Activated CD8-positive, alpha-beta T cell treated with anti-CD3 and anti-CD28 coated beads for 36 hours (primary cell): ENCODE measurements at regions of chr5 and their contacts with region 1.

Region 1: DNA sequence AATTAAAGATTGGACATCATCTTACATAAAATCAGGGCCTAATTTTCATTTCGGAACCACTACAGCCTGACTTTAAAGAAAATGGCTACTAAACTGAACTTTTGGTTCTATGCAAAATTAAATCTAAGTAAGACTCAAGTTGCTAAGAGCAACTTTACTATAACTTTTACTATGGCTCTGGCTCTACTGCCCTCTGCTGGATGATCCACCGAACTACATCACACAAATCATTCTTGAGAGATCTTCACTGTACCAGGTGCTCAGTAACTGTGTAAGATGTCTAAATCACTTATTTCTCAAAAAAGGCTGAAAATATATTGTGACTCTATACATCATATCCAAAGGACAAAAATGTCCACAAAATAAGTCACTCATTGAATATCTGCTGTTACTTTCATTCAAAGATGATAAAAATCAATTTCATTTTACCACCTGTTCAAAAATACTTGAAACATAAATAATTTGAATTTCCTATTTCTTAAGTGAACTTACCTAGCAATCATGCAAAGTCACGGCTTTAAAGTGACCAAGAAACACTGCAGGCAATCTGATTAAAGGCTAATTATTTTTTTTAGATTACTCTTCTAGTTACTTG is 13.5 kb downstream of the MOCS2 start:
- DNase-seq: peak; percentile 86
- ATAC-seq: peak; percentile 88
- H3K4me3 Mint-ChIP-seq: no peak overlapping the region
- H3K27ac Mint-ChIP-seq: no peak overlapping the region
- H3K4me1 Mint-ChIP-seq: peaks cover 3% of the 10 kb centered on the region
- H3K27me3 Mint-ChIP-seq: no peaks in the 10 kb centered on the region
- CTCF ChIP-seq: peak; percentile 81

Region 2: DNA sequence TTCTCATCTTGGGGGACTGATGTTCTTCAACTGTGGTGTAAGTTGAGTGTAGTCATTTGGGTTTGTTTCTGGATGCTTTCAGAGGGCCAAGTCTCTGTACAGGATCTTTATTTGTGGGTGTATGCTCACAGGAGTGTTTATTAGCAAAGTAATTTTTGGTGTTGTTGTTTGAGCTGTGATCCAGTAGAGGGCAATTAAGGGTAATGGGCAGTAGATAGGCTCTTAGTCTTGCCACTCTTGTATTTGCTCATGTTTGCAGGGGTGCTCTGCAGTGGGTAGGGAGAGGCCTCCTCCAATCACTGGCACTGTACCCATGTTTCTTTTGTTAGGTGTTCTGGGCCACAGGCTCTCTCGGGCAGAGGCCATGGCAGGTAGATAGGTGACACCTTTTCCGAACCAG is 152.7 kb before region 1 on chr5:
- CTCF ChIA-PET with region 1: interaction called, 144 read pairs
- POLR2A ChIA-PET with region 1: interaction called, 4 read pairs
- intact Hi-C with region 1: loop called (anchors 1 kb)
- DNase-seq: no peak
- ATAC-seq: peak; percentile 75
- H3K4me3 Mint-ChIP-seq: no peak overlapping the region
- H3K27ac Mint-ChIP-seq: no peak overlapping the region
- H3K4me1 Mint-ChIP-seq: peaks cover 14% of the 10 kb centered on the region
- H3K27me3 Mint-ChIP-seq: no peaks in the 10 kb centered on the region
- CTCF ChIP-seq: no peak

Region 3: GRCh38 chr5:53035868-53036381 is 60.1 kb before region 1 on chr5:
- CTCF ChIA-PET with region 1: interaction called, 5 read pairs
- POLR2A ChIA-PET with region 1: no interaction called
- intact Hi-C with region 1: loop called (anchors 10 kb)
- DNase-seq: peak; percentile 20
- ATAC-seq: no peak
- H3K4me3 Mint-ChIP-seq: no peak overlapping the region
- H3K27ac Mint-ChIP-seq: no peak overlapping the region
- H3K4me1 Mint-ChIP-seq: peaks cover 40% of the 10 kb centered on the region
- H3K27me3 Mint-ChIP-seq: no peaks in the 10 kb centered on the region
- CTCF ChIP-seq: peak; percentile 70

Region 4: DNA sequence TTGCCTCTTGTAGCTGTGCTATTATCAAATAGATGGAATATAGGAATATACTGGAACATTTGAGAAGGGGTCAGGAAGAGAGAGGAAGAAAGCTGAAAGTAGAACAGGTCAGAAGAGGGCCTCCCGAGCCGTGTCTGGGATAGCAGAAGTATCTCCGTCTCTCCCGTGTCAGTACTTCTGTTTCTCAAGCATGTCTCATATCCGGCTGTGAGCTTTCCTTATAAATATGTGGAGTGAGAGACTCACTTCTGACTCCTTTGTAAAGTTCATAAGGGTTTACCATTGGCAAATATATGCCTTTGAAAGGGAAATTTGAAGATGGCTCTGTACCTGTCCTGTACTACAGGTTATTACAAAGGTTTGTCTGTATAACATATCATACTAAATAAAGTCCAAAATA is 36.7 kb before region 1 on chr5:
- CTCF ChIA-PET with region 1: no interaction called
- POLR2A ChIA-PET with region 1: no interaction called
- intact Hi-C with region 1: no loop called
- DNase-seq: no peak
- ATAC-seq: no peak
- H3K4me3 Mint-ChIP-seq: no peak overlapping the region
- H3K27ac Mint-ChIP-seq: no peak overlapping the region
- H3K4me1 Mint-ChIP-seq: no peaks in the 10 kb centered on the region
- H3K27me3 Mint-ChIP-seq: peaks cover 9% of the 10 kb centered on the region
- CTCF ChIP-seq: no peak

Region 5: GRCh38 chr5:53109443-53110127 is 13.6 kb after region 1 on chr5 and contains the start of gene MOCS2:
- CTCF ChIA-PET with region 1: interaction called, 10 read pairs
- POLR2A ChIA-PET with region 1: interaction called, 4 read pairs
- intact Hi-C with region 1: no loop called
- DNase-seq: peak; percentile 92
- ATAC-seq: peak; percentile 99
- H3K4me3 Mint-ChIP-seq: peak within 1 kb of the TSS; percentile 95
- H3K27ac Mint-ChIP-seq: peak within 1 kb of the TSS; percentile 93
- H3K4me1 Mint-ChIP-seq: peaks cover 41% of the 10 kb centered on the region
- H3K27me3 Mint-ChIP-seq: no peaks in the 10 kb centered on the region
- CTCF ChIP-seq: no peak
- total RNA-seq, gene MOCS2: 18.6 to 19.9 TPM